ENCODE measurements at regions of chr13 and their contacts with region 1.

Region 1: DNA sequence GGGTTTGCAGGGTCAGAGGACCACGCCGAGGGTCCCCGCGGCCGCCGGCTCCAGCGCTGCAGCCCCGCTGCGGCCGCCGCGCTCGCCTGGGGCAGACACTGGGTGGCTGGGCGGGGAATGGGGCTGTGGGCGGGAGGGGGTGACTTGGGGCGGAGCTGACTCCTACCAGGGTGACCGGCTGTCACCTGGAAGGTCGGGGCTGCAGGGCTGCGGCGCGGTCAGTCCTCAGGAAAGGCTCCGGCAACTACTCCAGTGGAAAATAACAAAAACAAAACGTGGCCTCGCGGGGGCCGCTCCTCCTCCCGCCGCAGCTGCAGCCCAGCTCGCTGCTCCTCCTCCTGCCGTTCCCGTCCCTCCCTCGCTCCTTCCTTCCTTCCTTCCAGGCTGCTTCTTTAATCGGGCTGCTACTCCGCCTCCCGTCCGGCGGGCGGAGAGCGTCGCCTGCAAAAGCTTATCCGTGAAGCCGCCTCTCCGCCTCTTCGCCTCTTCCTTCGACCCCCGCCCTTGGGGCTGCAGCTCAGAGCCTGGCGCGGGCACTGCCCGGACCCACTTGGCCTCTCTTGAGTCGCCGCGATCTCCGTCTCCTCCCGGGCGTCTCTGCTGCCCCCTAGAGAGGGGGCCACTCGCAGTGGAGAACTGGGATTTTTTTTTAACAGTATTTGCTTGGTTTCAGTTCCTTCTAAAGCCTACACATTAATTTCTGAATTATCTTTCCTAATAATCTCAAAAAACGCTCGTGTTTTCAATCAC is at the start of gene TBC1D4:
- DNase-seq: peak in 8 of 9 donors; percentile 19 to 69 (median 22)
- ATAC-seq: peak; percentile 85
- H3K4me3 ChIP-seq: peak within 1 kb of the TSS; percentile 60
- H3K4me3 Mint-ChIP-seq: peak within 1 kb of the TSS; percentile 90 to 99 (median 95)
- H3K27ac ChIP-seq: no peak within 1 kb of the TSS
- H3K27ac Mint-ChIP-seq: peak within 1 kb of the TSS in 1 of 9 donors; percentile 83
- H3K4me1 ChIP-seq: peaks cover 0 to 5% of the 10 kb centered on the region in 2 donors
- H3K4me1 Mint-ChIP-seq: peaks cover 7 to 24% (median 18%) of the 10 kb centered on the region in 7 donors
- H3K27me3 ChIP-seq: peaks cover 12 to 15% of the 10 kb centered on the region in 2 donors
- H3K27me3 Mint-ChIP-seq: peaks cover 57 to 80% (median 74%) of the 10 kb centered on the region in 5 donors
- total RNA-seq, gene TBC1D4: 12.4 to 73.8 (median 42.8) TPM

Region 2: DNA sequence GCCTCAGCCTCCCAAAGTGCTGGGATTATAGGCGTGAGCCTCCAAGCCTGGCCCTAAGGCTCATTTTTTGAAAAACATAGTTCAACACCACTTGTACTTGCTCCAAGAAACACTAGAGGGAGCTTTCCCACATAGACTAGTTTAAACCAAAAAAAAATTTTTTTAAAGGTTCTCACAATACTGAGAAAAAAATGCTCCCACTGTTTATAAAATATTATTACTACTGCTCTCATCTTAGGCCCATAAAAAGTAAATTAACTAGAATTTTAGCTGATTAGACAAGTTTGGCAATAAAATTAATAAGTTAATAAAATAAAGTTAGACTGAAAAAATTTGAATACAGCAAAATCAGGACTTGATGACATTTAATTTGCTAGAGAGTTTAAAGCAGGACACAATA is 109.7 kb before region 1 on chr13:
- CTCF ChIA-PET with region 1: no interaction called
- POLR2A ChIA-PET with region 1: no interaction called
- intact Hi-C with region 1: loop called (anchors 1 to 2 kb)
- DNase-seq: peak in 7 of 9 donors; percentile 15 to 51 (median 38)
- ATAC-seq: peak; percentile 86
- H3K4me3 ChIP-seq: no peak overlapping the region
- H3K4me3 Mint-ChIP-seq: no peak overlapping the region
- H3K27ac ChIP-seq: no peak overlapping the region
- H3K27ac Mint-ChIP-seq: no peak overlapping the region
- H3K4me1 ChIP-seq: no peaks in the 10 kb centered on the region
- H3K4me1 Mint-ChIP-seq: peaks cover 0 to 2% (median 0%) of the 10 kb centered on the region in 7 donors
- H3K27me3 ChIP-seq: no peaks in the 10 kb centered on the region
- H3K27me3 Mint-ChIP-seq: peaks cover 0 to 8% (median 0%) of the 10 kb centered on the region in 5 donors

Region 3: GRCh38 chr13:75511226-75511625 is 29.0 kb after region 1 on chr13:
- CTCF ChIA-PET with region 1: no interaction called
- POLR2A ChIA-PET with region 1: no interaction called
- intact Hi-C with region 1: loop called in 1 of 2 experiments (anchors 2 kb)
- DNase-seq: no peak
- ATAC-seq: no peak
- H3K4me3 ChIP-seq: no peak overlapping the region
- H3K4me3 Mint-ChIP-seq: no peak overlapping the region
- H3K27ac ChIP-seq: no peak overlapping the region
- H3K27ac Mint-ChIP-seq: no peak overlapping the region
- H3K4me1 ChIP-seq: no peaks in the 10 kb centered on the region
- H3K4me1 Mint-ChIP-seq: peaks cover 0 to 5% (median 0%) of the 10 kb centered on the region in 7 donors
- H3K27me3 ChIP-seq: no peaks in the 10 kb centered on the region
- H3K27me3 Mint-ChIP-seq: peaks cover 0 to 18% (median 9%) of the 10 kb centered on the region in 5 donors

Region 4: DNA sequence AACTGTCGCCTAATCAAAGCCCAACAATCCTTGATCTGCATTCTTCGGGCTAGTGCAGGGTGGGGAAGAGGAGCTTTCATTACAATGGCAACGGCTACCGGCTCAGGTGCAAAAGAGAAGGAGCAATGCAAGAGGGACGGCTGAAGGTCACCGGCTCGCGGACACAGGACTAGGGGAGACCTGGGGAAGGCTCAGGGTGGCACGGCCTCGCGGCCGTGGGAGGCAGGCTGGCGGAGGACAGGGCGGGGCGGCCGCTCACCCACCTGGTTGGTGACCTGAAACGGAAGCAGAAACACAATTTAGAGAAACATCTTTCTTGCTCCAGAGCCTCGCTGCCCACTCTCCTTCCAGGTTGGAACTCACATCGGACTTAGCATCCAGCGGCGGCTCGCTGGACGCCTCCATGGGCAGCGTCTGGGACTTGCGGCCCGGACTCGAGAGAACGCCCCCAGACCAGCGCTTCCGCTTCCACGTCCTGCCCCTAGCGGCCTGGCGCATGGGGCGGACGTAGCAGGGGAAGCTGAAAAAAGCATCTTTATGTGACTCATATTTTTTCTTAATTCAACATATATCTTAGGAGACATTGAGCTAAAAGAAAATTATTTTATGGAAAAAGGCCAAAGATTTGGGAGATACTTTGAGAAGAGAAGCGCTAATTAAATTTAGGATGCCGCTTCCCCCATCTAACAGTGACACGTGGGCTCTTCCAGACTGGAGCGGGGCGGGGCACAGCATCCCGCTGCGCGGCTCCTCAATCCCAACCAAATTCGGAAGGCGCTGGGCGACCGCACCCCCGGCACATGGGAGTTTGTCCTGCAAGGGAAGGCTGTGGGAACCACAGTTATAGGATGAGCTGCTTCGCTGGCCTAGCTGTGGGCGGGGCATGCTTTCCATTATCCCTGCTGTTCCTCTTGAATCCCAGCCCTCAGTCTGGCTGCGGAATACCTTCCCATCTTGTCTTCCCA is 55.4 kb after region 1 on chr13 and contains the start of gene COMMD6:
- CTCF ChIA-PET with region 1: interaction called, 4 read pairs
- POLR2A ChIA-PET with region 1: no interaction called
- intact Hi-C with region 1: loop called in 1 of 2 experiments (anchors 1 kb)
- DNase-seq: peak; percentile 46 to 77 (median 65)
- ATAC-seq: peak; percentile 93
- H3K4me3 ChIP-seq: peak within 1 kb of the TSS; percentile 96
- H3K4me3 Mint-ChIP-seq: peak within 1 kb of the TSS; percentile 88 to 100 (median 98)
- H3K27ac ChIP-seq: peak within 1 kb of the TSS; percentile 85
- H3K27ac Mint-ChIP-seq: peak within 1 kb of the TSS; percentile 83 to 98 (median 95)
- H3K4me1 ChIP-seq: peaks cover 12 to 26% of the 10 kb centered on the region in 2 donors
- H3K4me1 Mint-ChIP-seq: peaks cover 28 to 57% (median 45%) of the 10 kb centered on the region in 7 donors
- H3K27me3 ChIP-seq: no peaks in the 10 kb centered on the region
- H3K27me3 Mint-ChIP-seq: no peaks in the 10 kb centered on the region
- total RNA-seq, gene COMMD6: 133 to 241 (median 205) TPM

Measured in naive thymus-derived CD4-positive, alpha-beta T cell (primary cell).